MCF 10A (cell line): ENCODE measurements at regions of chr15 and their contacts with region 1.

Region 1: GRCh38 chr15:90954712-90955671 is at the start of gene RCCD1:
- DNase-seq: peak; percentile 97
- H3K4me3 Mint-ChIP-seq: peak within 1 kb of the TSS; percentile 77
- H3K27ac Mint-ChIP-seq: peak within 1 kb of the TSS; percentile 84
- H3K4me1 Mint-ChIP-seq: peaks cover 10% of the 10 kb centered on the region
- H3K27me3 Mint-ChIP-seq: no peaks in the 10 kb centered on the region
- CTCF ChIP-seq: no peak
- total RNA-seq, gene RCCD1: 21.5 and 29.0 TPM in 2 replicates

Region 2: DNA sequence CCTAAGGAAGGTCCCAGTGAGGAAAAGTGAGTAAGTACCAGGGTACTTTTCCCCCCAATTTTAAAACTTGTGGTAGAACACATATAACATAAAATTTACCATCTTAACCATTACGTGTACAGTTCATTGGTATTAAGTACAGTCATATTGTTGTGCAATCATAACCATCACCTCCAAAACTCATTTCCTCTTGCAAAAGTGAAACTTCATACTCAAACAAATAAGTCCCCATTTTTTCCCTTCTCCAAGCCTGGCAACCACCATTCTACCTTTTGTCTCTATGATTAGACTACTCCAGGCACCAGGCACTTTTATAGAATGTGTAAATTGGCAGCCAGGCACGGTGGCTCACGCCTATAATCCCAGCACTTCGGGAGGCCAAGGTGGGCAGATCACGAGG is 27.1 kb after region 1 on chr15:
- CTCF ChIA-PET with region 1: interaction called, 74 read pairs
- POLR2A ChIA-PET with region 1: interaction called, 6 read pairs
- intact Hi-C with region 1: no loop called
- DNase-seq: peak; percentile 44
- H3K4me3 Mint-ChIP-seq: no peak overlapping the region
- H3K27ac Mint-ChIP-seq: peak overlapping the region; percentile 53
- H3K4me1 Mint-ChIP-seq: peaks cover 5% of the 10 kb centered on the region
- H3K27me3 Mint-ChIP-seq: no peaks in the 10 kb centered on the region
- CTCF ChIP-seq: no peak

Region 3: GRCh38 chr15:91022075-91022835 is 67.3 kb after region 1 on chr15 and contains the start of gene VPS33B:
- CTCF ChIA-PET with region 1: interaction called, 21 read pairs
- POLR2A ChIA-PET with region 1: interaction called, 20 read pairs
- intact Hi-C with region 1: no loop called
- DNase-seq: peak; percentile 87
- H3K4me3 Mint-ChIP-seq: peak within 1 kb of the TSS; percentile 83
- H3K27ac Mint-ChIP-seq: peak within 1 kb of the TSS; percentile 83
- H3K4me1 Mint-ChIP-seq: peaks cover 18% of the 10 kb centered on the region
- H3K27me3 Mint-ChIP-seq: no peaks in the 10 kb centered on the region
- CTCF ChIP-seq: no peak
- total RNA-seq, gene VPS33B: 11.7 and 12.6 TPM in 2 replicates

Region 4: GRCh38 chr15:91032919-91033803 is 78.2 kb after region 1 on chr15:
- CTCF ChIA-PET with region 1: interaction called, 41 read pairs
- POLR2A ChIA-PET with region 1: interaction called, 3 read pairs
- intact Hi-C with region 1: loop called (anchors 1 kb)
- DNase-seq: peak; percentile 80
- H3K4me3 Mint-ChIP-seq: no peak overlapping the region
- H3K27ac Mint-ChIP-seq: no peak overlapping the region
- H3K4me1 Mint-ChIP-seq: no peaks in the 10 kb centered on the region
- H3K27me3 Mint-ChIP-seq: peaks cover 26% of the 10 kb centered on the region
- CTCF ChIP-seq: peak; percentile 80

Region 5: GRCh38 chr15:91049378-91050127 is 94.6 kb after region 1 on chr15:
- CTCF ChIA-PET with region 1: interaction called, 105 read pairs
- POLR2A ChIA-PET with region 1: interaction called, 14 read pairs
- intact Hi-C with region 1: loop called (anchors 1 kb)
- DNase-seq: peak; percentile 77
- H3K4me3 Mint-ChIP-seq: no peak overlapping the region
- H3K27ac Mint-ChIP-seq: no peak overlapping the region
- H3K4me1 Mint-ChIP-seq: no peaks in the 10 kb centered on the region
- H3K27me3 Mint-ChIP-seq: peaks cover 33% of the 10 kb centered on the region
- CTCF ChIP-seq: peak; percentile 52